CD4-positive, alpha-beta T cell (primary cell): ENCODE measurements at regions of chr12 and their contacts with region 1.

Region 1: GRCh38 chr12:116708826-116709756 is 28.8 kb downstream of the SPRING1 start:
- DNase-seq: peak; percentile 16 to 73 (median 42)
- ATAC-seq: peak; percentile 89
- H3K4me3 ChIP-seq: no peak overlapping the region
- H3K4me3 Mint-ChIP-seq: no peak overlapping the region
- H3K27ac ChIP-seq: no peak overlapping the region
- H3K27ac Mint-ChIP-seq: no peak overlapping the region
- H3K4me1 ChIP-seq: peaks cover 14% of the 10 kb centered on the region
- H3K4me1 Mint-ChIP-seq: peaks cover 14% of the 10 kb centered on the region
- H3K27me3 ChIP-seq: no peaks in the 10 kb centered on the region
- H3K27me3 Mint-ChIP-seq: peaks cover 9% of the 10 kb centered on the region
- CTCF ChIP-seq: peak; percentile 76

Region 2: DNA sequence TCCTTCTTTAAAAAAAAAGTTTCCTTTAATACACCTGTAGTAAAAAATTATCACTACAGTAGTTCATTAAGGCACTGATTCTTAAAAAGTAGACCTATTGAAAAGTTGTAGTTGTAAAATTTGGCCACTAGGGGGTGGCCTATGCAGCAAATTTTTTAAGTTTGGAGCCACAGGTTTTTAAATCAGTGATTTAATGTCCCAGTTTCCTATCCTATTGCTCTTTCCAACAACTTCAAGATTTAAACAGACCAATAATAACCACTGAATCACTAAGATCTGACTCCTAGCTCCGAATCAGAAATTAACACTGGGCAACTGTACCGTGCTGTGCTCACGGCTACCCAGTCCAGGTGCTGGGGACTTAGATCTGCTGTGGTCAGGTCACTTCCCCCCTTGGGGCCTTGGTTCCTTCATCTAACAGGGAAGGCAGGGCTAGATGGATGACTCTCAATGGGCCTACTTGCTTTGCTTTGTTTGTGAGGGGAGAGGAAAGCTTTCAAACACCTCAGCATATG is 710.9 kb before region 1 on chr12:
- CTCF ChIA-PET with region 1: interaction called, 7 read pairs
- POLR2A ChIA-PET with region 1: no interaction called
- intact Hi-C with region 1: loop called (anchors 1 to 2 kb)
- DNase-seq: peak in 4 of 14 experiments; percentile 35 to 69 (median 56)
- ATAC-seq: peak; percentile 46
- H3K4me3 ChIP-seq: no peak overlapping the region
- H3K4me3 Mint-ChIP-seq: no peak overlapping the region
- H3K27ac ChIP-seq: no peak overlapping the region
- H3K27ac Mint-ChIP-seq: peak overlapping the region; percentile 54
- H3K4me1 ChIP-seq: peaks cover 3% of the 10 kb centered on the region
- H3K4me1 Mint-ChIP-seq: peaks cover 26% of the 10 kb centered on the region
- H3K27me3 ChIP-seq: no peaks in the 10 kb centered on the region
- H3K27me3 Mint-ChIP-seq: no peaks in the 10 kb centered on the region
- CTCF ChIP-seq: peak; percentile 94

Region 3: GRCh38 chr12:116066381-116067230 is 642.5 kb before region 1 on chr12:
- CTCF ChIA-PET with region 1: no interaction called
- POLR2A ChIA-PET with region 1: no interaction called
- intact Hi-C with region 1: loop called in 1 of 2 experiments (anchors 2 kb)
- DNase-seq: peak; percentile 32 to 80 (median 44)
- ATAC-seq: peak; percentile 89
- H3K4me3 ChIP-seq: no peak overlapping the region
- H3K4me3 Mint-ChIP-seq: no peak overlapping the region
- H3K27ac ChIP-seq: no peak overlapping the region
- H3K27ac Mint-ChIP-seq: no peak overlapping the region
- H3K4me1 ChIP-seq: no peaks in the 10 kb centered on the region
- H3K4me1 Mint-ChIP-seq: peaks cover 77% of the 10 kb centered on the region
- H3K27me3 ChIP-seq: no peaks in the 10 kb centered on the region
- H3K27me3 Mint-ChIP-seq: no peaks in the 10 kb centered on the region
- CTCF ChIP-seq: peak; percentile 90

Region 4: GRCh38 chr12:116142936-116143898 is 565.9 kb before region 1 on chr12:
- CTCF ChIA-PET with region 1: interaction called, 7 read pairs
- POLR2A ChIA-PET with region 1: interaction called, 3 read pairs
- intact Hi-C with region 1: loop called (anchors 1 to 5 kb)
- DNase-seq: peak in 3 of 14 experiments; percentile 25 to 32 (median 28)
- ATAC-seq: peak; percentile 26
- H3K4me3 ChIP-seq: no peak overlapping the region
- H3K4me3 Mint-ChIP-seq: peak overlapping the region; percentile 13
- H3K27ac ChIP-seq: no peak overlapping the region
- H3K27ac Mint-ChIP-seq: peak overlapping the region; percentile 13
- H3K4me1 ChIP-seq: peaks cover 15% of the 10 kb centered on the region
- H3K4me1 Mint-ChIP-seq: peaks cover 50% of the 10 kb centered on the region
- H3K27me3 ChIP-seq: no peaks in the 10 kb centered on the region
- H3K27me3 Mint-ChIP-seq: no peaks in the 10 kb centered on the region
- CTCF ChIP-seq: no peak